ENCODE measurements at regions of chr12 and their contacts with region 1.

Region 1: DNA sequence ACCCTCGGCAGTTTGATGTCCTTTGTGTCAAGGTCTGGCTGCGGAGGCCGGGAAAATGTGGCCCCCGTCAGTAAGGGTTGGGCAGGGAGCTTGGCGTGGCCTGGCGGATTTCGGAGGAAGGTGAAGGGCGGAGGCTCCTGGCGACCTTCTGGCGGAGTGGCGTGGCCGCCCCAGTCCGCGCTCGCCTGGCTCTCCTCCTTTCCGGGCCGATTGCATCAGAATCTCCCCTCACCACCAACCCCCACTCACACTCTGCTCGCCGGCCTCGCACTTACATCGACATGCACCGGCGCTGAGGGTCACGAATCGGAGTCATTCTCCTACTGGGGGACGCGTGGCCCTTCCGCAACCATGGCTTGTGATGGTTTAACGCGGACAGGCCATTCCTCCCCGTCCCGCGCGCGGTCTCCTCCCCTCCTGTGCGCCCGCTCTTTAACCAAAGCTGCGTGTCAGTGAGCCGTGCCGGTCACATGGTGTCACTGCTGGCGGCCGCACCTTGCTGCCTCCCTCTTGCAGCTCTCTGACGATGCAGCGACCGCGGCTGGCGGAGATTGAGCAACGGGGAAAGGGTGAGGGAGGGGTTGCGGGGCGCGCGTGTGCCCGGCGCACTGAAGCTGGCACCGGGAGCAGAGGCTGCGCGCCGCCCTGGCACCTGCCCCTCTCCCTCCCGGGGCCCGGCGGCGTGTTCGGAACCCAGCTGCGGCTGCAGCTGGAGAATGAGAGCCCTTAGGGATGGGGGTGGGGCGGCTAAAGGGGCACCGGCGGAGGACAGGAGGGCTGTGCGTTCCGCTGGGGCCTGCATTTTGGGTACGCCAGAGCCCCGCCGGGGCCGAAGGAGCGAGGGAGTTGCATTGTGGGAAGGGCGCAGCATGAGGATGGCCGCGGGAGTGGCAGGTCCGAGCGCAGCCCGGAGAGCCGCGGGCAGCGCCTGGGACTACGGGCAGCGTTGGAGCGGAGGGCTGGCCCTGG is at the start of gene SLC38A1:
- DNase-seq: peak; percentile 88
- H3K4me3 ChIP-seq: peak within 1 kb of the TSS; percentile 50 to 59
- H3K27ac ChIP-seq: peak within 1 kb of the TSS; percentile 81 to 83
- H3K4me1 ChIP-seq: no peaks in the 10 kb centered on the region
- H3K27me3 ChIP-seq: no peaks in the 10 kb centered on the region
- CTCF ChIP-seq: no peak
- POLR2A ChIP-seq: peak; percentile 82
- total RNA-seq, gene SLC38A1: 24.1 to 45.1 TPM

Region 2: DNA sequence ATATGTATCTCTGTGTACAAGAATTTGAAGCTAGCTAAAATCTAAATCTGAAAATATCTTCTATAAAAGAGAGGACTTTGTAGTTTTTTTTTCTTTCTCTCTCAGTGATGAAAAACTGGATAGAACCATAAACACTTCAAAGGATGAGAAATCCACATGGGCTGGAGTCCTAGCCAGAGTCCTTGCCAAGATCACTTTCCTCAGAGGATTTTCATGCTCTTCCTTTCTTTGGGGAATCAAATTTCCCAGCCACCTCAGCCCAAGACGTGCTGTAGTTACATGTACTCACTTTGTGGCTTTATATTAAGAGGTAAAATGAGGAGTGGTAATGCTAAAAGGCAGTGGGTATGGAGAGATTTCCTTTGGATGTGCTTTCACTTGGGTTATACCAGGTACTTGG is 110.4 kb before region 1 on chr12:
- intact Hi-C with region 1: loop called (anchors 5 kb)
- DNase-seq: no peak
- H3K4me3 ChIP-seq: no peak overlapping the region
- H3K27ac ChIP-seq: no peak overlapping the region
- H3K4me1 ChIP-seq: no peaks in the 10 kb centered on the region
- H3K27me3 ChIP-seq: no peaks in the 10 kb centered on the region
- CTCF ChIP-seq: no peak
- POLR2A ChIP-seq: no peak

Region 3: GRCh38 chr12:46209914-46210872 is 58.7 kb before region 1 on chr12:
- intact Hi-C with region 1: loop called (anchors 2 kb)
- DNase-seq: peak; percentile 27
- H3K4me3 ChIP-seq: no peak overlapping the region
- H3K27ac ChIP-seq: peak overlapping the region; percentile 8 to 60
- H3K4me1 ChIP-seq: no peaks in the 10 kb centered on the region
- H3K27me3 ChIP-seq: no peaks in the 10 kb centered on the region
- CTCF ChIP-seq: no peak
- POLR2A ChIP-seq: no peak

Region 4: DNA sequence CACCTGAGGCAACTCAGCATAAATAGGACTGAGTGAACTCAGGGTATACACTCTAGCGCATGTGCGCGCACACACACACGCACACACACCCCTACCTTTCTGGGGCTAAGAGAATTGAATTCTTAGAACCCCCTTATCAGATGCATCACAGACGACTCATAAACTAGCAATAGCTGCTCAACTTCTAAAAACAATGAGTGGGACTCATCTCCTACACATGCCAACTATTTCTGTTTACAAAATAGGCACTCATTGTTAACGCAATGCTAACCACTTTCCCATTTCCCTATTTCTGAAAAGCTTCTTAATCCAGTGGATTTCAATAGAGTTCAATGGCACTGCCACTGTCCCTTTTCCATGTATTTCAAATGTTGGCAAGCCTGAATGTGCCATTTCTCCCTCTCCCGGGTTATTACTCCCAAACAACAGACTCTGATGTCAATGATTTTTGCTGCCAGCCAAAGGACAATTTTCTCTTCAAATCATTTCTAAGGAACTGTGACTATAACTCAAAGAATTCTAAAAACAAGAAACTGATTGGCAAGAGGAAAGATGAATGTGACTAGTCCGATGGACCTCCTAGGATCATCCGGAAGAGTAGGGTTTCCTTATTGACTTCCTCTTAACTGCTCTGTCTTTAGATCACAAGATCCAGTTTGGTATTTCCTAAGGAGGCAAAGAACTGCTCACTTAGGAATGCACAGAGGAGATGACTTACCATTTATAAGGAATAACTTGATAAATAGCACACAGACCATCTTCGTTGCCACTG is 48.8 kb before region 1 on chr12:
- intact Hi-C with region 1: loop called (anchors 5 kb)
- DNase-seq: no peak
- H3K4me3 ChIP-seq: no peak overlapping the region
- H3K27ac ChIP-seq: peak overlapping the region; percentile 6 to 10
- H3K4me1 ChIP-seq: peaks cover 4% of the 10 kb centered on the region
- H3K27me3 ChIP-seq: no peaks in the 10 kb centered on the region
- CTCF ChIP-seq: no peak
- POLR2A ChIP-seq: no peak

Region 5: GRCh38 chr12:46492471-46493351 is 223.8 kb after region 1 on chr12:
- intact Hi-C with region 1: no loop called
- DNase-seq: no peak
- H3K4me3 ChIP-seq: no peak overlapping the region
- H3K27ac ChIP-seq: peak overlapping the region; percentile 60 to 82
- H3K4me1 ChIP-seq: no peaks in the 10 kb centered on the region
- H3K27me3 ChIP-seq: no peaks in the 10 kb centered on the region
- CTCF ChIP-seq: no peak
- POLR2A ChIP-seq: no peak

Region 6: DNA sequence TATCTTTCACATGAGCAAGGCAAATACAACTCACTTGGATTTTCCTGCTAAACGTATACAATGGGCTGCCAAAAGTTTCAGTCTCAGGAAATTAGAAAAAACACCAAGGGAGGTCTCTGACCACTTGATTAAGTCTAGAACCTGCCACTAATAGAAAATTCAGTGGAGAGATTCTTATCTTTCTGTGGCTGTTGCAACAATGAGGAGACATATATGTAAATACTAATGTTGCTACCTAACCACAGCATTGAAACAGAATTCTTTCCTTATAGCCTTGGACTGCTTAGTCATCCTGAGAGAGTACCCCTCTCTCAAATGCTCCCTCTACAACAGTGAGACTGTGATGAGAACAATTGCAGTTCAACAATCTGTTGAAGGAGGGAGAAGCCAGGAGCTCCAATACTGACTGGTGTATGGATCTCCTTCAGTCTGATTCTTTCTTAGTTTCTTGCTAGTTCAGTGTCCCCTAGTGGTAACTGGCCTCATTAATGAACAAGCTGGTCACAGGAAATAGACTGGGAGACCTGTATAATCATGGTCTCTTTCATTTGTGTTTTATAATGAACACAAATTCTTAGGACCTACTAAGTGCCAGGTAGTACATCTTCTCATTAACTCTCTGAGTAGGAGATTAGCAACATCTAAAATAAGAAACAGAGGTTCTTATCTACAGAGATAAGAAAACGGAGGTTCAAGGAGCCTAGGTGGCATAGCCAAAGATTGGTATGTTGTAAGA is 392.4 kb after region 1 on chr12:
- intact Hi-C with region 1: loop called (anchors 10 kb)
- DNase-seq: peak; percentile 33
- H3K4me3 ChIP-seq: no peak overlapping the region
- H3K27ac ChIP-seq: peak overlapping the region in 1 of 2 donors; percentile 1
- H3K4me1 ChIP-seq: no peaks in the 10 kb centered on the region
- H3K27me3 ChIP-seq: no peaks in the 10 kb centered on the region
- CTCF ChIP-seq: peak in 3 of 4 experiments; percentile 72 to 84 (median 78)
- POLR2A ChIP-seq: no peak

Measured in prostate gland (tissue), 2 donors.